ENCODE measurements at regions of chr2 and their contacts with region 1.

Region 1: GRCh38 chr2:20737505-20737904 is 70.6 kb downstream of the GDF7 start:
- DNase-seq: no peak
- H3K4me3 ChIP-seq: no peak overlapping the region
- H3K27ac ChIP-seq: no peak overlapping the region
- H3K4me1 ChIP-seq: no peaks in the 10 kb centered on the region
- H3K27me3 ChIP-seq: no peaks in the 10 kb centered on the region
- CTCF ChIP-seq: no peak

Region 2: GRCh38 chr2:20698916-20699613 is 38.4 kb before region 1 on chr2:
- CTCF ChIA-PET with region 1: no interaction called
- dilution Hi-C with region 1: loop called (anchors 5 kb)
- in situ Hi-C with region 1: no loop called
- intact Hi-C with region 1: no loop called
- DNase-seq: no peak
- H3K4me3 ChIP-seq: no peak overlapping the region
- H3K27ac ChIP-seq: no peak overlapping the region
- H3K4me1 ChIP-seq: no peaks in the 10 kb centered on the region
- H3K27me3 ChIP-seq: no peaks in the 10 kb centered on the region
- CTCF ChIP-seq: no peak

Measured in mammary epithelial cell (primary cell).